Right cardiac atrium (tissue), 5 donors: ENCODE measurements at regions of chr1 and their contacts with region 1.

Region 1: DNA sequence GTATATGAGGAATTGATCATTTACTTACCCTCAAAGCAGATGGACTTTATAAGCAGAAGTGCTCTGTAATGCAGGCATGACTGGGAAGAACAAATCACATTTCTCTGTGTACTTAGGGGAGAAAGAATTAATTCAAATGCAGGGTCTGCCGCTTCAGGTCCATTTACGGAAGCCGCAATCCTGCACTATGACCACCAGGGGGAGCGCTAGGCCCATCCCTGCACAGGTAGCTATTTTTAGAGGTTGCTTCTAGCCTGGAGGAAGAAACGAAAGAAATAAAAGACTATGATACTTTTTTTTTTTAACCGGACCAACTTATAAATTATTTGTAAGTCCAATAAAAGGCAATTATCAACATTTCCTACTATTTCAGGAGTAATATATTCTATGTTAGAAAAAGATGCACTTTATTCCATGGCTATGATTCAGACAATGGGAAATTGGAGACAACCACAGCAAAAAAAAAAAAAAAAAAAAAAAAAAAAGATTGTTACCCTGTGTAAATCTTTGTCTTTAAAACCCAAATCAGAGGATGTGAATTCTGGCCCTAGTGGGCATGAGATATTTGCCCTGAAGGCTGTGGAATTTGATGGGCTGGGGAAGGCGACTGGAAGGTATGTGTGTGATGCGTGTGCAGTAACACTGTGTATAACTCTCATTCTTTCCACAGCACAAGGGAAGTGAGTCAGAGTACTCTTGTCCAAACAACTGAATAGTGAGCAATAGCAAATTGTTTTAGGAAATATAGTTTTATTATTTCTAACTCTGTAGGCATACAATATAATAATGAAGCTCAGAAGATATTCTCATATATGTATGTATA is 12.9 kb upstream of the FYB2 start:
- DNase-seq: peak; percentile 54 to 80 (median 61)
- ATAC-seq: peak; percentile 71 to 85
- H3K4me3 ChIP-seq: no peak overlapping the region
- H3K27ac ChIP-seq: no peak overlapping the region
- H3K4me1 ChIP-seq: no peaks in the 10 kb centered on the region
- H3K27me3 ChIP-seq: no peaks in the 10 kb centered on the region

Region 2: DNA sequence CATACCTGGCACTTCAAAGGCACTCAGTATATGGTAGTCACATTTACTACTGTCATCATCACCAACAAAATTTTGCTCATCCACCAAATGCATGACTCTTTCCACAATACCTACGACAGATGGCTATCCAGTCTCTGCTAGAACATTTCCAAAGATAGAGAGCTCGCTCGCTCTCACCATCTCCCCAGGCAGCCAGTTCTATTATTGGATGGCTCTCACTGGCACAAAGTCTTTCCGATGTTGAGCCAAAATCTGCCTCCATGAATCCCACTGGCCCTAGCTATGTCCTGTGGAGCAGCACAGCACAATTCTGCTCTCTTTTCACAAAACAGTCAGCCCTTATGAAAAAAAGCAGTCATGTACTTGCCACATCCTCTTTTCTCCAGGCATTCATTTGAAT is 489.7 kb after region 1 on chr1:
- intact Hi-C with region 1: loop called in 1 of 4 experiments (anchors 10 kb)
- DNase-seq: no peak
- ATAC-seq: no peak
- H3K4me3 ChIP-seq: no peak overlapping the region
- H3K27ac ChIP-seq: no peak overlapping the region
- H3K4me1 ChIP-seq: no peaks in the 10 kb centered on the region
- H3K27me3 ChIP-seq: no peaks in the 10 kb centered on the region

Region 3: GRCh38 chr1:57340334-57341070 is 508.4 kb after region 1 on chr1:
- intact Hi-C with region 1: loop called in 1 of 4 experiments (anchors 5 kb)
- DNase-seq: no peak
- ATAC-seq: no peak
- H3K4me3 ChIP-seq: no peak overlapping the region
- H3K27ac ChIP-seq: no peak overlapping the region
- H3K4me1 ChIP-seq: no peaks in the 10 kb centered on the region
- H3K27me3 ChIP-seq: no peaks in the 10 kb centered on the region

Region 4: GRCh38 chr1:58047265-58047858 is 1215.3 kb after region 1 on chr1:
- intact Hi-C with region 1: loop called in 3 of 4 experiments (anchors 2 to 5 kb)
- DNase-seq: peak; percentile 18 to 56 (median 56)
- ATAC-seq: no peak
- H3K4me3 ChIP-seq: no peak overlapping the region
- H3K27ac ChIP-seq: no peak overlapping the region
- H3K4me1 ChIP-seq: no peaks in the 10 kb centered on the region
- H3K27me3 ChIP-seq: no peaks in the 10 kb centered on the region